Astrocyte of the cerebellum (primary cell): ENCODE measurements at regions of chr4 and their contacts with region 1.

Region 1: GRCh38 chr4:38730830-38731646 is 51.8 kb downstream of the TLR10 start:
- DNase-seq: peak; percentile 96
- H3K4me3 ChIP-seq: no peak overlapping the region
- CTCF ChIP-seq: peak; percentile 96

Region 2: GRCh38 chr4:38084877-38085711 is 645.9 kb before region 1 on chr4:
- in situ Hi-C with region 1: loop called (anchors 5 kb)
- DNase-seq: no peak
- H3K4me3 ChIP-seq: no peak overlapping the region
- CTCF ChIP-seq: no peak

Region 3: GRCh38 chr4:38663801-38664705 is 67.0 kb before region 1 on chr4 and contains the start of gene KLF3:
- in situ Hi-C with region 1: loop called (anchors 5 kb)
- DNase-seq: peak; percentile 75
- H3K4me3 ChIP-seq: peak within 1 kb of the TSS; percentile 81
- CTCF ChIP-seq: no peak